PC-9 (cell line): ENCODE measurements at regions of chr20 and their contacts with region 1.

Region 1: DNA sequence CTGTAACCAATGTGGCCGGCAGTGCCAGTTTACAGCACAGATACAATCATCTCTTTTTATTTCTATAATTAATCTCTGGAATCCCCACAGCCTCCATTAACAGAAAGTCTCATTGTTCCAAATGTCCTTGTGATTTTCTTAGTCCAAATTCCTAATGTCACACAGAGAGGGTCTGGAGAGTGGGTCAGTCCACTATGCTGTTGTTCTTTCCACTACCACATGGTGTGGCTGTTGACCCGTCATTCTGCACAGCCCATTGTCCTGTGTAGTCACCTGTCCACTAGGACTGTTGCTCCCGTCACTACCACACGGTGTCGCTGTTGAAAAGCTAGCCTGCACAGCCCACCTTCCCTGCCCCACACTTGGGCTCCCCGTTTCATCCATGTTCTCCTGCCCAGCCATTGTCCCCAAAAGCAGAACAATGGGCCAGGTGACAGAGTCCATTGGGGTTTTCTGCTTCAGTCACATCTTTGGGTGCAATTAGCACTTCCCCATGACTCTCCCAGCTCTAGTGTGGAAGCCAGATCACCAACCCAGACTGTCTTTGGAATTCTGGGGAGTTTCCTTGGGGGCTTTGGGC is 8.6 kb upstream of the LBP start:
- DNase-seq: peak; percentile 60 to 61
- H3K4me3 ChIP-seq: no peak overlapping the region
- H3K27ac ChIP-seq: no peak overlapping the region
- H3K4me1 ChIP-seq: no peaks in the 10 kb centered on the region
- H3K27me3 ChIP-seq: peaks cover 48% of the 10 kb centered on the region; the same call in 1 of the 2 replicates
- CTCF ChIP-seq: peak; percentile 94

Region 2: DNA sequence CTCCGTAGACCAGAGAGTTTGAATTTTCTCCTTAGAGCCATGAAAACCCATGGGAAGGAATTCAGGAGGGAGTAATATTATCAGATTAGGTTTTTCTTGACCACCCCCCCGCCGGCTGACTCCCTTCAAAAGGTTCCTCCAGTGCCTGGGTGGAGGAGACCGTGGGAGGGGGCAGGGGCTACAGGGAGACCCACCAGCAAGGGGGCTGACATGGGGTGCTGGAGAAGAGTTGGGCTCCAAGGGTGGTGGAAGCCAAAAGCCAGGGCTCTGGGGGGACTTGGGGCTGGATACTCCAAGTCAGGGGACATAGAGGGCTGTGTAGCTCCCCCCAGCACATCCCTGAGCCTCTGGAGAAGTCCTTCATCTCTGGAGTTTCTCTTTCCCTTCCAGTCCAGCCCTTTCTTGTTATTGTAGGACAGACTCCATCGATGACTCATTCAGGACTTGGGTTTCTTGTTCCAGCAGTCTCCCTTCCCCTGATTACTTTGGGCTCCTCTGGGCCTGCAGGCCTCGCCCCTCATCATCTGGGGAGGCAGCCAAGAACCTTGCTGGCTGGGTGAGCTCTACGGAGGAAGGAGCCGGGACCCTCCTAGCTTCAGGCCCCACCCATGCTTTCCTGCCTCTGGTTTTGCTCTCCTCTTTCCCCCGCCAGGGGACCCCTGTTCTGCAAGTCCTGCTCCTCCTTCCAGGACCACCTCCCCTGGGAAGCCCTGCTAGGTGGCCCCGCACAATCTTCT is 66.6 kb before region 1 on chr20:
- CTCF ChIA-PET with region 1: no interaction called
- POLR2A ChIA-PET with region 1: no interaction called
- intact Hi-C with region 1: no loop called
- DNase-seq: peak; percentile 67 to 80
- H3K4me3 ChIP-seq: no peak overlapping the region
- H3K27ac ChIP-seq: no peak overlapping the region
- H3K4me1 ChIP-seq: peaks cover 26% of the 10 kb centered on the region
- H3K27me3 ChIP-seq: no peaks in the 10 kb centered on the region
- CTCF ChIP-seq: no peak

Region 3: DNA sequence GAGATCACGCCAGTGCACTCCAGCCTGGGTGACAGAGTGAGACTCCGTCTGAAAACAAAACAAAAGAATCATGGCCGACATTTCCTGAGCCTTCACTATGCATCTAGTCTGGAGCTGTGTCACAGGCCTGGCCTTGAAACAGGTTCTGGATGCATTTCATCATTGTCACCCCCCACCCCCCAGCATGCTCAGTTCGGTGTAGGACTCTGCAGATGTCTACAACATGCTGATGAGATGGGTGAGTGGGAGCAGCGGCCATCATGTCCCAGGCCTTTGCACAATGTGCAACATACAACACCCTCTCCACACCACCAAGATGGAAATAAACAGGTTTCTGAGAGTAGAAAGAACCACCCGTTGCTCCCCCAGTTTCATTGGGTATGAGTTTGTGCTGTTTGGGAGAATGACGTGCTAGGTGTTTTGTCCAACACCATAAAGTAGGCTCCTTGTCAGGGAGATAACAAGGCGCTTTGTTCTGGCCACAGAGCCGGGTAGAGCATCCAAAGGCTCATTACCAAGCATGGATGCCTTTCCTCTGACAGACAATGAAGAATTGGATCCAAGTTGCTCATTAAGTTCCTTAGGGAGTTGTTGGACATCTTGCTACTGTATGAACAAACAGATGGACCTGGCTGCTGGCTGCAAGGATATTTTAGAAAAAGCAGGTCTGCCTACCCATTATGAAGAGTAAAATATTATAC is 75.4 kb after region 1 on chr20:
- CTCF ChIA-PET with region 1: interaction called, 10 read pairs
- POLR2A ChIA-PET with region 1: no interaction called
- intact Hi-C with region 1: loop called (anchors 1 kb)
- DNase-seq: no peak
- H3K4me3 ChIP-seq: no peak overlapping the region
- H3K27ac ChIP-seq: no peak overlapping the region
- H3K4me1 ChIP-seq: no peaks in the 10 kb centered on the region
- H3K27me3 ChIP-seq: no peaks in the 10 kb centered on the region
- CTCF ChIP-seq: no peak

Region 4: DNA sequence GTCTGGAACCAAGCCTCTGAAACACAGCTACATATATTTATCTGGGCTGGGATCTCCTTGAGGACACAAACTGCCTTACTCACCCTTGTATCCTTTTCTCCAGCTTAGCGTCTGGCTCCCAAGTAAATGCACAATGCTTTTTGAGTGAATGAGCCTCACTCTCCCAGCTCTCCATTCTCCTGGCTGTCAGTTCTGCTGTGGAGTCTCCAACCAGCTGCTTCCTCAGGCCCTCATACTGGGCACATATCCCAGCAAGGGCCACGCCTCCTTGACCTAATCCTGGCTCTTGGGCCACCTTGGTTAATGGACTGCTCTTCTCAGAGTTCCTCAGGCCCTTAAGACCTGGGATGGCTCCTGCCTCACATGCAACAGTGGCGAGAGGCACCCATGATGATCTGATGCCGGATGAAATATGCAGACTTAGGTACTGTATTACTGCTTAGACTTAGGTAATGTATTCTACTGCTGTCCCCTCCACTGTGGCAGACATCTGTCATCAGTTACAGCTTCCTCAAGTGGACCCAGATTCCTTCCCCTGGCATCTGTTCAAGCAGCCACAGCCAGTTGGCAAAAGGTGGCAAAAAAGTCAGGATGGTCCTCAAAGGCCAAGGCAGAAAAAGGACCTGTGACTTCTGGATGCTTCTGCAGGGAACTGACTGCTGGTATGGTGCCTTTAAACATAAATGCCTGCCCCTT is 81.0 kb after region 1 on chr20:
- CTCF ChIA-PET with region 1: interaction called, 10 read pairs
- POLR2A ChIA-PET with region 1: no interaction called
- intact Hi-C with region 1: no loop called
- DNase-seq: no peak
- H3K4me3 ChIP-seq: no peak overlapping the region
- H3K27ac ChIP-seq: no peak overlapping the region
- H3K4me1 ChIP-seq: no peaks in the 10 kb centered on the region
- H3K27me3 ChIP-seq: no peaks in the 10 kb centered on the region
- CTCF ChIP-seq: no peak

Region 5: GRCh38 chr20:38730989-38731737 is 393.5 kb after region 1 on chr20:
- CTCF ChIA-PET with region 1: no interaction called
- POLR2A ChIA-PET with region 1: no interaction called
- intact Hi-C with region 1: loop called (anchors 10 kb)
- DNase-seq: peak in 1 of 2 experiments; percentile 38
- H3K4me3 ChIP-seq: no peak overlapping the region
- H3K27ac ChIP-seq: no peak overlapping the region
- H3K4me1 ChIP-seq: no peaks in the 10 kb centered on the region
- H3K27me3 ChIP-seq: peaks cover 82% of the 10 kb centered on the region
- CTCF ChIP-seq: peak; percentile 96

Region 6: DNA sequence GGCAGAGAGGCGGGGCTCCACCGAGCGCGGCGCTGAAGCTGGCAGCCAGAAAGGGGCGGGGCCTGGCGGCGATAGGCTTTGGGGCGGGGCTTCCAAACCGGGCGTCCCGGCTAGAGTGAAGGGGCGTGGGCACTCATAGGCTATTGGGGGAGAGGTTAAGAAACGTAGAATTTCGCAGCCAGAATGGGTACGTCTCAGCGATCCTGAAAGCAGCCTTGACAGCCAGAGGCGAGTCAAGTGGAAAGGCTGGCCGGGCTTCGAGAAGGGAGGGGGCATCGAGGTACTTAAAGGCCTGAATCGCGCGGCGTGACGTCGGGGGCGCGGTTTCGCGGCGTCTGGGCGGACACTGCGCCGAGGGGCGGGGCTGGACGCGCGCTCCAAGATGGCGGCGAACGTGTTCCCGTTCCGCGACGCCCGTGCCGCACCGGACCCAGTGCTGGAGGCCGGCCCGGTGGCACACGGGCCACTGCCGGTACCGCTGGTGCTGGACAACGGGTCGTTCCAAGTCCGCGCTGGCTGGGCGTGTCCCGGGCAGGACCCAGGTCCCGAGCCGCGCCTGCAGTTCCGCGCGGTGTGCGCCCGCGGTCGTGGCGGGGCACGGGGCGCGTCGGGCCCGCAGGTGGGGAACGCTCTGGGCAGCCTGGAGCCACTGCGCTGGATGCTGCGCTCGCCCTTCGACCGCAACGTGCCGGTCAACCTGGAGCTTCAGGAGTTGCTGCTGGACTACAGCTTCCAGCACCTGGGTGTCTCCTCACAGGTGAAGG is 410.6 kb after region 1 on chr20 and contains the start of gene ACTR5:
- CTCF ChIA-PET with region 1: no interaction called
- POLR2A ChIA-PET with region 1: no interaction called
- intact Hi-C with region 1: loop called (anchors 1 kb)
- DNase-seq: peak; percentile 73 to 97
- H3K4me3 ChIP-seq: peak within 1 kb of the TSS; percentile 79
- H3K27ac ChIP-seq: peak within 1 kb of the TSS; percentile 40
- H3K4me1 ChIP-seq: peaks cover 13% of the 10 kb centered on the region; the same call in 1 of the 2 replicates
- H3K27me3 ChIP-seq: peaks cover 26% of the 10 kb centered on the region
- CTCF ChIP-seq: no peak
- total RNA-seq, gene ACTR5: 7.8 and 10.1 TPM in 2 replicates

Region 7: GRCh38 chr20:38790200-38791053 is 452.8 kb after region 1 on chr20:
- CTCF ChIA-PET with region 1: no interaction called
- POLR2A ChIA-PET with region 1: no interaction called
- intact Hi-C with region 1: no loop called
- DNase-seq: peak; percentile 42 to 61
- H3K4me3 ChIP-seq: peak overlapping the region; percentile 24; the same call in 1 of the 2 replicates
- H3K27ac ChIP-seq: peak overlapping the region; percentile 67
- H3K4me1 ChIP-seq: peaks cover 17% of the 10 kb centered on the region
- H3K27me3 ChIP-seq: no peaks in the 10 kb centered on the region
- CTCF ChIP-seq: peak; percentile 85

Region 8: DNA sequence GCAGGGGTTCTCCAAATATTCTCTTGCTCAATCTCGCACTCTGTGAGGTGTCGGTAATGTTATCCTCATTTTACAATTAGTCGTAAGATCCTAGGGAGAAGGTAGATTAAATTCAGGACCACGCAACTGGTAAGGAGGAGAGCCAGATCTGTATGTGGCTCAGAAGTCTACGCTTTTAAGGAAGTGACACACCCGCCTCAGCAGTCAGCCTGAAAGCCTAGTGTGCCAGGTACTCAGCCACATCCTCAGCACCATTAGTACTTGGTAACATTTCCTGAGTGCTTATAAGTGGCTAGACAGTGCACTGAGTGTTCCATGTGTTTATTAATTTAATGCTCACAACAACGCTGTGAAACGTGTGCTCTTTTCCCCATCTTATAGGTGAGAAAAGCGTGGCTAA is 688.2 kb after region 1 on chr20:
- CTCF ChIA-PET with region 1: no interaction called
- POLR2A ChIA-PET with region 1: no interaction called
- intact Hi-C with region 1: no loop called
- DNase-seq: no peak
- H3K4me3 ChIP-seq: no peak overlapping the region
- H3K27ac ChIP-seq: no peak overlapping the region
- H3K4me1 ChIP-seq: no peaks in the 10 kb centered on the region
- H3K27me3 ChIP-seq: no peaks in the 10 kb centered on the region
- CTCF ChIP-seq: no peak

Region 9: GRCh38 chr20:39049684-39050554 is 712.3 kb after region 1 on chr20:
- CTCF ChIA-PET with region 1: no interaction called
- POLR2A ChIA-PET with region 1: no interaction called
- intact Hi-C with region 1: loop called (anchors 5 kb)
- DNase-seq: peak in 1 of 2 experiments; percentile 75
- H3K4me3 ChIP-seq: peak overlapping the region; percentile 97
- H3K27ac ChIP-seq: no peak overlapping the region
- H3K4me1 ChIP-seq: 0 out of 2 replicates have a peak, but pooled peaks cover 6% of the 10 kb centered on the region
- H3K27me3 ChIP-seq: peaks cover 20% of the 10 kb centered on the region; the same call in 1 of the 2 replicates
- CTCF ChIP-seq: peak; percentile 96